ENCODE measurements at regions of chr17 and their contacts with region 1.

Region 1: GRCh38 chr17:63425482-63425881 is 20.6 kb downstream of the CYB561 start:
- DNase-seq: peak; percentile 81 to 89 (median 83)
- H3K4me3 ChIP-seq: peak overlapping the region in 2 of 7 experiments; percentile 14 to 37
- H3K27ac ChIP-seq: no peak overlapping the region
- H3K4me1 ChIP-seq: peaks cover 16 to 71% (median 69%) of the 10 kb centered on the region in 4 experiments
- H3K27me3 ChIP-seq: no peaks in the 10 kb centered on the region

Region 2: DNA sequence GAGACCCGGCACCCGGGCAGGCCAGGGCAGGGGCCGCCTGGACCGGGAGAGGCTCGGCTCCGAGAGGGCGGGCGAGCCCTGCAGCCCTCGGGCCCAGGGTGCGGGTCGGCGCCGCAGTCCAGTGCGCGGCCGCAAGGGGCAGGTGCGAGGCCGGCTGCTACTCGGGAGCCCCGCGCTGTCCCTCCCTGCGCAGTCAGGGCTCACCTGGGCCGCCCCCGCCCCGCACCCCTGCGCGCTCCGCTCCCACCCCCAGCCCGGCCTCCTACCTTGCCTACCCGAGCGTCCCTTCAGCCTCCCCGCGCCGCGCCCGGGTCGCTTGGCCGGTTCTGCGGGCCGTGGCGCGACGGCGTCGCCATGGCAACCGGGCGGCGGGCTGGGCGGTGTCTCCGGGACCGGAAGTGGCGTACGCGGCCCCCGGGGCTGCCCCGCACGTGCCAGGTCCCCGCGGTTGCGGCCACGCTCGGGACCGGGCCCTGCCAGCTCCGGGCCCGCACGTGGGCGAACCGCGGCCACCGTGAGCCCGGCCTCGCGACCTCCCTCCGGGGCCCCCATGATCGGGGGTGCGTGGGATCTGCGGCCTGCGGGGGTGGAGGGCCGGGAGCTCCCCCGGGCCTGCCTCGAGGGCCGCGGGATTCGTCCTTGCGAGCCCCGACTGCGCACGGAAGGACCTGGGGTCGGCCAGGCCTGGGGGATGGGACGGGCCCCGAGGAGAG is 20.7 kb after region 1 on chr17 and contains the start of gene CYB561:
- CTCF ChIA-PET with region 1: interaction called, 359 read pairs
- POLR2A ChIA-PET with region 1: interaction called, 15 read pairs
- DNase-seq: peak; percentile 62 to 78 (median 75)
- H3K4me3 ChIP-seq: peak within 1 kb of the TSS; percentile 27 to 74 (median 63)
- H3K27ac ChIP-seq: peak within 1 kb of the TSS; percentile 74 to 88
- H3K4me1 ChIP-seq: peaks cover 0 to 81% (median 60%) of the 10 kb centered on the region in 4 experiments
- H3K27me3 ChIP-seq: no peaks in the 10 kb centered on the region

Region 3: GRCh38 chr17:63486317-63487013 is 61.0 kb after region 1 on chr17:
- CTCF ChIA-PET with region 1: interaction called, 562 read pairs
- POLR2A ChIA-PET with region 1: no interaction called
- DNase-seq: no peak
- H3K4me3 ChIP-seq: no peak overlapping the region
- H3K27ac ChIP-seq: no peak overlapping the region
- H3K4me1 ChIP-seq: no peaks in the 10 kb centered on the region
- H3K27me3 ChIP-seq: no peaks in the 10 kb centered on the region

Region 4: DNA sequence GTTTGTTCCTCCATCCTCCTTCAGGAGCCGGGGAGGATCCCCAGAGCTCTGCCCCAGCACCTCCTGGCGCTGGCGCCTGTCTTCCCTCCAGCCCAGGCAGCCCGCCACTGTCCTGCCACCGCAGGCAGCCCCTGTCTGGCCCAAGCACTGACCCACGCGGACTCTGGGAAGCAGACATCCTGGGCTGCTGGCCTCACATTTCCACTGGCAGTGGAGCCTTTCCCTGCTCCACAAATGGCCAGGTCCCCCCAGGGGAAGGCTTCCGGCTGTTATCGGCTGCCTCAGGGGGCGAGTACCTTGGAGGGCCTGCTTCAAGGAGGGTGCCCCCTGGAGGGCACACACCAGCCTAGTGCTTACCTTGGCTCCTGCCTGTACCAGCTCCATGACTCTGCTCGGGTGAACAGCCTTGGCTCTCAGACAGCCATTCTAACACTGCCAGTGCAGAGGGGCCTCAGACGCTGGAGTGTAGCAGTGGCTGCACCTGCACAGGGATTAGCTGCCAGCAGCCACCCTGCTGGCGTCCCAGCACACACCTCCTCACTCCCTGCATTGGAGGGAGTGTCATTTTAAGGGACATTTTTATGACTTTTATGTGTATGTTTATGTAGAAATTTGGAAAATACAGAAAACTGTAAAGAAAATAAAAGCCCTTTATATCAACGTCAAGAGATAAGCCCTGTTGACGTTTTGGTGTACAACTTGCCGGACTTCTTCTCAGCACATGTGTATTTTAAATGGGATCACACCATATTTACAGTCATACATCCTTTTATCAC is 72.4 kb after region 1 on chr17:
- CTCF ChIA-PET with region 1: interaction called, 15 read pairs
- POLR2A ChIA-PET with region 1: no interaction called
- DNase-seq: peak; percentile 20 to 43 (median 39)
- H3K4me3 ChIP-seq: no peak overlapping the region
- H3K27ac ChIP-seq: no peak overlapping the region
- H3K4me1 ChIP-seq: peaks cover 0 to 3% (median 0%) of the 10 kb centered on the region in 4 experiments
- H3K27me3 ChIP-seq: peaks cover 0 to 5% (median 0%) of the 10 kb centered on the region in 5 experiments

Region 5: GRCh38 chr17:63611354-63611753 is 185.9 kb after region 1 on chr17:
- CTCF ChIA-PET with region 1: interaction called, 41 read pairs
- POLR2A ChIA-PET with region 1: no interaction called
- DNase-seq: no peak
- H3K4me3 ChIP-seq: no peak overlapping the region
- H3K27ac ChIP-seq: no peak overlapping the region
- H3K4me1 ChIP-seq: peaks cover 0 to 1% (median 0%) of the 10 kb centered on the region in 4 experiments
- H3K27me3 ChIP-seq: no peaks in the 10 kb centered on the region

Region 6: DNA sequence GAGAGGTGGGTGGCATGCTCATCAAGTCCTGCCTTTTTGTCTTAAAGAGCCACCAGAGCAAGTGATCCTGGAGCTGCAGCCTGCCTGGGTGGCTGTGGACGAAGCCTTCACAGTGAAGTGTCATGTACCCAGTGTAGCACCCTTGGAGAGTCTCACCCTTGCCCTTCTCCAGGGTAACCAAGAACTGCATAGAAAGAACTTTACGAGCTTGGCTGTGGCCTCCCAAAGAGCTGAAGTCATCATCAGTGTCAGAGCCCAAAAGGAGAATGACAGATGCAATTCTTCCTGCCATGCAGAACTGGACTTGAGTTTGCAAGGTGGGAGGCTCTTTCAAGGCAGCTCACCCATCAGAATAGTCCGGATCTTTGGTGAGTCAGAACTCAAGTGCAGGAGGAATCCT is 433.8 kb after region 1 on chr17:
- CTCF ChIA-PET with region 1: no interaction called
- POLR2A ChIA-PET with region 1: no interaction called
- DNase-seq: no peak
- H3K4me3 ChIP-seq: no peak overlapping the region
- H3K27ac ChIP-seq: no peak overlapping the region
- H3K4me1 ChIP-seq: no peaks in the 10 kb centered on the region
- H3K27me3 ChIP-seq: no peaks in the 10 kb centered on the region